ENCODE measurements at regions of chr5 and their contacts with region 1.

Region 1: GRCh38 chr5:103232393-103232999 is 26.1 kb upstream of the MACIR start:
- DNase-seq: no peak
- ATAC-seq: peak; percentile 73 to 91
- H3K4me3 ChIP-seq: no peak overlapping the region
- H3K27ac ChIP-seq: no peak overlapping the region
- H3K4me1 ChIP-seq: no peaks in the 10 kb centered on the region
- H3K27me3 ChIP-seq: no peaks in the 10 kb centered on the region
- CTCF ChIP-seq: peak; percentile 82

Region 2: DNA sequence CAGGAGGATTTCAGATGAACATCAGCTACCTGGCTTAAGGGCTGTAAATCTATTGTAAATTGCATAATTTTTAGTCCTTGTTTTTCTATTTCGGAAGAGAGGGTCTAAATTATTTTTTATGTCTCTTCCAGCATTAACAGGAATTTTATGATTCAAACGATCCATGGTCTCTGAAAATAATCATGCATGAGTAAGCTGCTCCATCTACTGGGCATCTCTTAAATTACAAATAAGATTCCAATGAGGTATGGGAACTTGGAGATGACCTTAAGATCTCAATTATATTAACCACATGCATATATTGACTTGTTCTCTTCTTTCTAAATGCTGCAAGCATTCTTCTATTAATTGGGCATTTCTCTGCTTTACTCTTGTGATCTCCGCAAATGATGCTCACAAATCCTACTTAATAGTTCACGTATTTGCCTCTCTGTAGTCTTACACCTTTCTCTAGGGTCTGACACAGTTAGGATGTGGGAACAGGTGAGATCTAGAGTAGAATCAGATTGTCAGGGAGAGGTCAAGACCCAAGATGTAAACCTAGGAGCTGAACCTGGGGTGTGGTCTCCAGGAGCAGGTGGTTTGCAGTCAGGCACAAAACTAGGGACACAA is 243.2 kb after region 1 on chr5:
- intact Hi-C with region 1: loop called (anchors 5 kb)
- DNase-seq: no peak
- ATAC-seq: no peak
- H3K4me3 ChIP-seq: no peak overlapping the region
- H3K27ac ChIP-seq: no peak overlapping the region
- H3K4me1 ChIP-seq: no peaks in the 10 kb centered on the region
- H3K27me3 ChIP-seq: no peaks in the 10 kb centered on the region
- CTCF ChIP-seq: peak; percentile 66